IMR-90 (cell line): ENCODE measurements at regions of chr16 and their contacts with region 1.

Region 1: DNA sequence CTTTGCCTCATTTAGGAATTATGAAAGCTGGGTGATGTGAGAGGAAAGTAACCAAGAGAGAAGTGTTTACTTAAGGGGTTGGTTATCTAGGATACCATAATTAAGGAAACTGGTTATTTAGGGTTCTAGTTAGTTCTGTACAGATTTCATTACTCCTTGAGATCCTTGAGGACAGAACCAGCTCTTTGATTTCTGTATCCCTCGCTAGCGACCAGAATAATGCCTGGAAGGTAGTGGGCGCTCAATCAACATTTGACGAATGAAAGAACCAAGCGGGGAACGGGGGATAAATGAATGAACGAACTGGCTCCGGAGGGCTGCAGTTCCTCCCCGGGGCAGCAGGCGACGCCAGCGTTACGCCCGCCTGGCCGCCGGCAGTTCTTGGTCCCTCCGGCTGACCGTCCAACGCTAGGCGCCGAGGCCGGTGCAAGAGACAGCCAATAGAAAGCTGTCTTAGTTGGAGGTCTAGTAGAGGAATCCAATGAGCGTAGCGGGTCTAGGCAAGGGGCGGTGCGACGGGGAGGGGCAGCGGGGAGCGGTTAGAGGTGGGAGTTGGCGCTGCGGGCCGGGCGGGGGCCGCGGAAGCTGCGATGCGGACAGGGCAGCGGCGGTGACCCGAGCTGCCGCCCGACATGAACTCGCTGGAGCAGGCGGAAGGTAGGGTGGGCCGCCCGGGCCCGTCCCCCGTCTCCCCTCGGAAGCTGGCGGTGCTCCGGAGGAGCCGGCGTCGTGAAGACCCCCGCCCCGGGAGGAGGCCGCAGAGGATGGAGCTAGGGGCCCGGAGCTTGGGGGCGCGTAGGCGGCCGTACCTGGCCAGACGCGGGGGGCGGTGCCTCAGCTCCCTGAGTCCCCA is at the start of gene CNEP1R1:
- DNase-seq: peak; percentile 95
- ATAC-seq: peak; percentile 97
- H3K4me3 ChIP-seq: peak within 1 kb of the TSS; percentile 100
- H3K27ac ChIP-seq: peak within 1 kb of the TSS; percentile 34
- H3K4me1 ChIP-seq: no peaks in the 10 kb centered on the region
- H3K27me3 ChIP-seq: peaks cover 4% of the 10 kb centered on the region; the same call in 1 of the 2 replicates
- CTCF ChIP-seq: peak; percentile 99
- POLR2A ChIP-seq: peak; percentile 45; the same call in 1 of the 2 replicates
- RAD21 ChIP-seq: peak; percentile 94
- total RNA-seq, gene CNEP1R1: 22.0 and 38.6 TPM in 2 replicates

Region 2: DNA sequence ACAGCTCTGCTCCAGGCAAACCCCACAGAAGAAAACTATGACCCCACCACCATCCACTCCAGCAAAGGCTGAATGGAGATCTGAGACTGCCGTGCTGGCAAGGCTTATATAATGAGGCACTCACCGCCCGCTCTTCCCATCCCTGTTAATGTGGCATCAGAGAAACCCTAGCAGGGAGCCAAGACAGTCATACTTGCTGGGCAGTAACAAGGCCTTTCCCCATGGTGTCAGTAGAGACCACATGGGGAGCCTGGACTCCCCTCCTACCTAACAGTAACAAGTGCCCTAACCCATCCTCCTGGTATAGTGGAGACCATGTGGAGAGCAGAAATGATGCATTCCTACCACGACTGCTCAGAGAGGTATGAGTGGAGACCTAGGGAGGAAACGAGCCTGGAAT is 416.1 kb before region 1 on chr16:
- CTCF ChIA-PET with region 1: no interaction called
- POLR2A ChIA-PET with region 1: no interaction called
- dilution Hi-C with region 1: no loop called
- in situ Hi-C with region 1: no loop called
- intact Hi-C with region 1: loop called (anchors 5 kb)
- DNase-seq: peak; percentile 61
- ATAC-seq: peak; percentile 89
- H3K4me3 ChIP-seq: no peak overlapping the region
- H3K27ac ChIP-seq: no peak overlapping the region
- H3K4me1 ChIP-seq: no peaks in the 10 kb centered on the region
- H3K27me3 ChIP-seq: peaks cover 18% of the 10 kb centered on the region; the same call in 1 of the 2 replicates
- CTCF ChIP-seq: peak; percentile 69
- POLR2A ChIP-seq: no peak
- RAD21 ChIP-seq: peak; percentile 79

Region 3: GRCh38 chr16:49947907-49948650 is 76.8 kb before region 1 on chr16:
- CTCF ChIA-PET with region 1: no interaction called
- POLR2A ChIA-PET with region 1: no interaction called
- dilution Hi-C with region 1: no loop called
- in situ Hi-C with region 1: no loop called
- intact Hi-C with region 1: no loop called
- DNase-seq: no peak
- ATAC-seq: no peak
- H3K4me3 ChIP-seq: no peak overlapping the region
- H3K27ac ChIP-seq: no peak overlapping the region
- H3K4me1 ChIP-seq: no peaks in the 10 kb centered on the region
- H3K27me3 ChIP-seq: no peaks in the 10 kb centered on the region
- CTCF ChIP-seq: no peak
- POLR2A ChIP-seq: no peak
- RAD21 ChIP-seq: no peak

Region 4: DNA sequence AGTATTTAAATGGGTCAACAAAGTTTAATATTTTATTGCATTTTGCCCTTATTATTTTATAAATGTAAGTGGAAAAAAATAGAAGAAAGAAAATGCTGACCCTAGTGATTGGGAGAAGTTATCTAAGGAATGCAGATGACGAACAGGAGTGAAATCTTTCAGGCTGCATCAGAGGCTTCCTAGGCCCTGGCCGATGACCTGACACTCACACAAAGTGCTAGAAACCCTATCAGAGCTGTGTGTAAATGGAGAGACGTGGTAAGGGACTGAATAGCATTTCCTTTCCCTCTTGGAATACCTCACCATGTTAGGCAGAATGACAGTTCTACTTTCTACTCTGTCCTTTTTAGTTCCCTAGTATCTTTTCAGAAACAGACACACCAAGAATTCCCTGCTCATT is 44.7 kb before region 1 on chr16:
- CTCF ChIA-PET with region 1: no interaction called
- POLR2A ChIA-PET with region 1: no interaction called
- dilution Hi-C with region 1: no loop called
- in situ Hi-C with region 1: no loop called
- intact Hi-C with region 1: no loop called
- DNase-seq: peak; percentile 7
- ATAC-seq: peak; percentile 44
- H3K4me3 ChIP-seq: no peak overlapping the region
- H3K27ac ChIP-seq: no peak overlapping the region
- H3K4me1 ChIP-seq: no peaks in the 10 kb centered on the region
- H3K27me3 ChIP-seq: peaks cover 1% of the 10 kb centered on the region; the same call in 1 of the 2 replicates
- CTCF ChIP-seq: no peak
- POLR2A ChIP-seq: no peak
- RAD21 ChIP-seq: no peak

Region 5: DNA sequence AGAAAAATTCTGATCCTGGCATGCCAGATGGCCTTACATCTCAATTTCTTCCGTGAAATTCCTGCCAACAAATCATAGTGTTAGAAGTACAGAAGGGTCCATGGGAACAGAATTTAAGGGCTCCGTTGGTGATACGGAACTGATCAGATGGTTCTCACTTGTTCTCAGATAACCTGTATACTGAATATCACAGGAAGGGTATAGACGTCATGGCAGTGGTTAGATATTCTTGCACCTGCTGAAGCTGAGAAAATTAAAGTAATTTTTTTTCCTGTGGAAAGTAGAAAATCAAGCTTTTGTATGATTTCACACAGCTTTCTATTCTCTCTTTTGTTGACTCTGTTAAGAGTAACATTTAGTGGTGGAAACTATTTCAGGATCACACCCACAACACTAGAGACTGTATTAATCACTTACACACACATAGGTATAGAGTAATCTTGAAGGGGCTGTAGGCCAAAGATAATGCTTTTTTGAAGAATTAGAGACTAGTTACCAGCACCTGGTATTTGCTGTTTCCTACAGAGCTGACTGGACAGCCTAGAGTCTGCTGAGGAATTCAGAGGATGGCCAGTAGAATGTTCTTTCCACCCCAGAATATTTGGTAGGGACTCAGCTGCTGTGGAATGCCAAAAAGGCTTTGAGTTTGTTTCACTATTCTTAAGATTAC is 135.7 kb after region 1 on chr16:
- CTCF ChIA-PET with region 1: interaction called, 4 read pairs
- POLR2A ChIA-PET with region 1: no interaction called
- dilution Hi-C with region 1: no loop called
- in situ Hi-C with region 1: no loop called
- intact Hi-C with region 1: loop called (anchors 5 kb)
- DNase-seq: peak; percentile 41
- ATAC-seq: peak; percentile 98
- H3K4me3 ChIP-seq: no peak overlapping the region
- H3K27ac ChIP-seq: no peak overlapping the region
- H3K4me1 ChIP-seq: peaks cover 3% of the 10 kb centered on the region; the same call in 1 of the 2 replicates
- H3K27me3 ChIP-seq: no peaks in the 10 kb centered on the region
- CTCF ChIP-seq: no peak
- POLR2A ChIP-seq: no peak
- RAD21 ChIP-seq: no peak

Region 6: DNA sequence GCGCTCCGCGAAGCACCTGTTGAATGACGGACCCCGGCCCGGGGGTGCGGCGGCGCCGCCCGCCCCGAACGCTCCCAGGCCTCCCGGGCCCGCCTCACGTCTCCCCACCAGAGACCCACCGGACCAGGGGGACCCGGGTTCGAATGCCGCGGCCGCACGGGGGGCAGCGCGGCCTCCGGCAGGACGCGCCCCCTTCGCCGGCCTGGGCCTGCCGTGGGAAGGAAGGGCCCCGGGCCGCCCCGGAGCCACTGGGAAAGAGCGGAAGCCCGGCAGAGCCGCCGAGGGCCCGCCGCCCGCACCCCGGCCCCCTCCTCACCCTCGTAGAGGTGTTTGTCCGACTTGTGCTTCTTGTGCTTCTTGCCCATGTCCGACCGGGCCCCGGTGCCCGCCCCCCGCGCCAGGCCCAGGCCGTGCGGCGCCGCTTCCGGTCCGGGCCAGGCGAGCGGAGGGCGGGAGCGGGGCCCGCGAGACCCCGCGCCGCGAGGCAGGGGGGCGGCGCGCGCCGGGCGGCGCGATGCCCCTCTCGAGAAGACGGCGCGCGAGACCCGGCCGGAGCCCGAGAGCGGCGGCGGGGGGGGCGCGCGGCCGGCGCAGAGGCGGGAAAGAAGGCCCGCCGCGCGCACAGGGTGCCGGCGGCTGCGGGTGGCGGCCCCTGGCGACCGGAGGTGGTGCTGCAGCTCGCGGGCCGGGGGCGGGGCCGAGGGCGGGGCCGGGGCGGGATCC is 343.7 kb after region 1 on chr16 and contains the start of gene BRD7:
- CTCF ChIA-PET with region 1: interaction called, 3 read pairs
- POLR2A ChIA-PET with region 1: no interaction called
- dilution Hi-C with region 1: no loop called
- in situ Hi-C with region 1: no loop called
- intact Hi-C with region 1: loop called (anchors 5 kb)
- DNase-seq: peak; percentile 37
- ATAC-seq: peak; percentile 96
- H3K4me3 ChIP-seq: peak within 1 kb of the TSS; percentile 88
- H3K27ac ChIP-seq: peak within 1 kb of the TSS; percentile 33; the same call in 1 of the 2 replicates
- H3K4me1 ChIP-seq: peaks cover 2% of the 10 kb centered on the region; the same call in 1 of the 2 replicates
- H3K27me3 ChIP-seq: peaks cover 10% of the 10 kb centered on the region
- CTCF ChIP-seq: peak; percentile 56
- POLR2A ChIP-seq: no peak
- RAD21 ChIP-seq: peak; percentile 29
- total RNA-seq, gene BRD7: 29.9 and 38.9 TPM in 2 replicates

Region 7: GRCh38 chr16:50665128-50665878 is 640.4 kb after region 1 on chr16:
- CTCF ChIA-PET with region 1: interaction called, 3 read pairs
- POLR2A ChIA-PET with region 1: no interaction called
- dilution Hi-C with region 1: no loop called
- in situ Hi-C with region 1: no loop called
- intact Hi-C with region 1: loop called (anchors 2 kb)
- DNase-seq: peak; percentile 57
- ATAC-seq: peak; percentile 98
- H3K4me3 ChIP-seq: peak overlapping the region; percentile 47
- H3K27ac ChIP-seq: no peak overlapping the region
- H3K4me1 ChIP-seq: no peaks in the 10 kb centered on the region
- H3K27me3 ChIP-seq: no peaks in the 10 kb centered on the region; the same call in 1 of the 2 replicates
- CTCF ChIP-seq: peak; percentile 94
- POLR2A ChIP-seq: no peak
- RAD21 ChIP-seq: peak; percentile 83